B cell (primary cell): ENCODE measurements at regions of chrX and their contacts with region 1.

Region 1: GRCh38 chrX:132631579-132632232 is 142.9 kb upstream of the MBNL3 start:
- DNase-seq: peak; percentile 53
- ATAC-seq: no peak
- H3K4me3 ChIP-seq: no peak overlapping the region
- H3K4me3 Mint-ChIP-seq: no peak overlapping the region
- H3K27ac ChIP-seq: no peak overlapping the region
- H3K27ac Mint-ChIP-seq: no peak overlapping the region
- H3K4me1 ChIP-seq: no peaks in the 10 kb centered on the region
- H3K4me1 Mint-ChIP-seq: no peaks in the 10 kb centered on the region
- H3K27me3 ChIP-seq: no peaks in the 10 kb centered on the region
- H3K27me3 Mint-ChIP-seq: no peaks in the 10 kb centered on the region
- CTCF ChIP-seq: peak; percentile 46

Region 2: GRCh38 chrX:131841496-131842410 is 790.0 kb before region 1 on chrX:
- CTCF ChIA-PET with region 1: interaction called, 8 read pairs
- POLR2A ChIA-PET with region 1: no interaction called
- intact Hi-C with region 1: loop called (anchors 1 kb)
- DNase-seq: peak; percentile 66
- ATAC-seq: peak; percentile 67
- H3K4me3 ChIP-seq: no peak overlapping the region
- H3K4me3 Mint-ChIP-seq: no peak overlapping the region
- H3K27ac ChIP-seq: no peak overlapping the region
- H3K27ac Mint-ChIP-seq: no peak overlapping the region
- H3K4me1 ChIP-seq: peaks cover 6 to 7% of the 10 kb centered on the region in 2 donors
- H3K4me1 Mint-ChIP-seq: peaks cover 3% of the 10 kb centered on the region
- H3K27me3 ChIP-seq: no peaks in the 10 kb centered on the region
- H3K27me3 Mint-ChIP-seq: no peaks in the 10 kb centered on the region
- CTCF ChIP-seq: peak; percentile 73

Region 3: DNA sequence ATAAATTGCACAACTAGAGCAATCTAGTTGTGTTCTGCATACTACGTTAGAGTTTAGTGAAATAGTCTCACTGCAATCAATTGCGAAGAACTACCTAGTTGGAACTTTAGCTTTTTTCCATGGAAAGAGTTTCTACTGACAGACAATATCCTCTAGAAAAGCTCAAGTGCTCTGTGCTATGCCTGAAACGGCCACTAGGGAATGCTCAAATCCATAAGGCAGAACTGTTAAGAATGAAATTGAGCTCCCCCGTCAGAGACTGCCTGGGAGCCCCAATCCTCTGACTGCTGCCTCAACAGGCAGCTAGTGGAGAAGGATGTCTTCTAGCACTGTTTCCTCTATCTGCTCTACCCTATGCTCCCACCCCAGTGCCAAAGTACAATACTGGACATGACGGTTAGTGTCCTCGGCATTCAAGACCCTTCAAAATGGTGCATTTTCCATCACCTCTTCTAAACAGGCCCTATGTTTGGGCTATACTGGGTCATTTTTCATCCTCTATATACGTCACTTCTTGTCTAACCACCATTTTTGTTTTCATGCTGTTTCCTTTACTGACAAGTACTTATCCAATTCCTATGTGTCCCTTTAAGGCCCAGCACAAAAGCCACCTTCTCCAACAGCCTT is 539.2 kb before region 1 on chrX:
- CTCF ChIA-PET with region 1: interaction called, 13 read pairs
- POLR2A ChIA-PET with region 1: no interaction called
- intact Hi-C with region 1: no loop called
- DNase-seq: peak; percentile 59
- ATAC-seq: peak; percentile 65
- H3K4me3 ChIP-seq: no peak overlapping the region
- H3K4me3 Mint-ChIP-seq: no peak overlapping the region
- H3K27ac ChIP-seq: no peak overlapping the region
- H3K27ac Mint-ChIP-seq: no peak overlapping the region
- H3K4me1 ChIP-seq: no peaks in the 10 kb centered on the region
- H3K4me1 Mint-ChIP-seq: no peaks in the 10 kb centered on the region
- H3K27me3 ChIP-seq: no peaks in the 10 kb centered on the region
- H3K27me3 Mint-ChIP-seq: peaks cover 3% of the 10 kb centered on the region
- CTCF ChIP-seq: peak; percentile 67

Region 4: GRCh38 chrX:132226169-132226568 is 405.5 kb before region 1 on chrX:
- CTCF ChIA-PET with region 1: interaction called, 14 read pairs
- POLR2A ChIA-PET with region 1: no interaction called
- intact Hi-C with region 1: loop called (anchors 1 kb)
- DNase-seq: no peak
- ATAC-seq: no peak
- H3K4me3 ChIP-seq: no peak overlapping the region
- H3K4me3 Mint-ChIP-seq: no peak overlapping the region
- H3K27ac ChIP-seq: no peak overlapping the region
- H3K27ac Mint-ChIP-seq: no peak overlapping the region
- H3K4me1 ChIP-seq: no peaks in the 10 kb centered on the region
- H3K4me1 Mint-ChIP-seq: peaks cover 6% of the 10 kb centered on the region
- H3K27me3 ChIP-seq: peaks cover 0 to 3% (median 0%) of the 10 kb centered on the region in 4 experiments
- H3K27me3 Mint-ChIP-seq: no peaks in the 10 kb centered on the region
- CTCF ChIP-seq: peak; percentile 51

Region 5: DNA sequence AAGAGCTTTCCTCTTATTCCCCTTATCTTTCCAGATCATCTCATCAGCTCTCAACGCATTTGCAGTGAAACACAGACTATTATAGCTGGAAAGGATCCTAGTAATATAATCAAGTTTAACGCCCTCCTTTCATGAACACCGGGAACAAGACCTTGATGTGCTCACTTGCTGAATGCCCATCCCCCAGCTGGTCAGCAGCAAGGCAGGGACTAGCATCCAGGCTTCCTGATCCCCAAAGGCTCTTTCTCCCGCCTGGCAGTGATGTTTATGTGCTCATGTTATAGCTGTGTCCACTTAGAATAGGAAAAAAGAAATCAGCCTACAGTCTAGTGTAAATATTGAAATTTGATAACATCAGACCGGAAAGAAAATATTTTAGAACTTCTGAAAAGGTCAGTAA is 759.0 kb after region 1 on chrX:
- CTCF ChIA-PET with region 1: no interaction called
- POLR2A ChIA-PET with region 1: no interaction called
- intact Hi-C with region 1: no loop called
- DNase-seq: no peak
- ATAC-seq: no peak
- H3K4me3 ChIP-seq: no peak overlapping the region
- H3K4me3 Mint-ChIP-seq: no peak overlapping the region
- H3K27ac ChIP-seq: no peak overlapping the region
- H3K27ac Mint-ChIP-seq: no peak overlapping the region
- H3K4me1 ChIP-seq: no peaks in the 10 kb centered on the region
- H3K4me1 Mint-ChIP-seq: no peaks in the 10 kb centered on the region
- H3K27me3 ChIP-seq: no peaks in the 10 kb centered on the region
- H3K27me3 Mint-ChIP-seq: peaks cover 4% of the 10 kb centered on the region
- CTCF ChIP-seq: no peak